ENCODE measurements at regions of chr12 and their contacts with region 1.

Region 1: GRCh38 chr12:13094347-13094746 is 9.1 kb downstream of the GSG1 start:
- DNase-seq: no peak
- ATAC-seq: no peak
- H3K4me3 ChIP-seq: peak overlapping the region in 1 of 2 experiments; percentile 20; a peak in 2 of 4 replicates
- H3K27ac ChIP-seq: no peak overlapping the region; the same call in 1 of the 2 replicates
- H3K4me1 ChIP-seq: peaks cover 26 to 56% of the 10 kb centered on the region in 2 experiments
- H3K27me3 ChIP-seq: no peaks in the 10 kb centered on the region
- CTCF ChIP-seq: no peak
- POLR2A ChIP-seq: no peak
- RAD21 ChIP-seq: no peak

Region 2: GRCh38 chr12:13203034-13203922 is 108.9 kb after region 1 on chr12:
- CTCF ChIA-PET with region 1: interaction called, 14 read pairs
- POLR2A ChIA-PET with region 1: interaction called, 4 read pairs
- RAD21 ChIA-PET with region 1: interaction called, 4 to 8 read pairs
- intact Hi-C with region 1: loop called (anchors 1 kb)
- DNase-seq: no peak
- ATAC-seq: peak; percentile 47
- H3K4me3 ChIP-seq: 0 out of 4 replicates have a peak overlapping the region, but pooled peaks of 1 of the 2 experiments have one; percentile 45
- H3K27ac ChIP-seq: peak overlapping the region; percentile 82
- H3K4me1 ChIP-seq: peaks cover 50 to 100% of the 10 kb centered on the region in 2 experiments
- H3K27me3 ChIP-seq: no peaks in the 10 kb centered on the region
- CTCF ChIP-seq: peak; percentile 38 to 57 (median 48); a peak in 5 of 6 replicates
- POLR2A ChIP-seq: no peak
- RAD21 ChIP-seq: peak; percentile 85

Region 3: GRCh38 chr12:13523536-13524307 is 429.4 kb after region 1 on chr12:
- CTCF ChIA-PET with region 1: no interaction called
- POLR2A ChIA-PET with region 1: no interaction called
- RAD21 ChIA-PET with region 1: no interaction called
- intact Hi-C with region 1: no loop called
- DNase-seq: no peak
- ATAC-seq: peak; percentile 74
- H3K4me3 ChIP-seq: 0 out of 4 replicates have a peak overlapping the region, but pooled peaks of 1 of the 2 experiments have one; percentile 6
- H3K27ac ChIP-seq: peak overlapping the region; percentile 4; the same call in 1 of the 2 replicates
- H3K4me1 ChIP-seq: peaks cover 34 to 48% of the 10 kb centered on the region in 2 experiments
- H3K27me3 ChIP-seq: no peaks in the 10 kb centered on the region
- CTCF ChIP-seq: no peak
- POLR2A ChIP-seq: no peak
- RAD21 ChIP-seq: no peak

Measured in HCT116 (cell line).